ENCODE measurements at regions of chr6 and their contacts with region 1.

Region 1: DNA sequence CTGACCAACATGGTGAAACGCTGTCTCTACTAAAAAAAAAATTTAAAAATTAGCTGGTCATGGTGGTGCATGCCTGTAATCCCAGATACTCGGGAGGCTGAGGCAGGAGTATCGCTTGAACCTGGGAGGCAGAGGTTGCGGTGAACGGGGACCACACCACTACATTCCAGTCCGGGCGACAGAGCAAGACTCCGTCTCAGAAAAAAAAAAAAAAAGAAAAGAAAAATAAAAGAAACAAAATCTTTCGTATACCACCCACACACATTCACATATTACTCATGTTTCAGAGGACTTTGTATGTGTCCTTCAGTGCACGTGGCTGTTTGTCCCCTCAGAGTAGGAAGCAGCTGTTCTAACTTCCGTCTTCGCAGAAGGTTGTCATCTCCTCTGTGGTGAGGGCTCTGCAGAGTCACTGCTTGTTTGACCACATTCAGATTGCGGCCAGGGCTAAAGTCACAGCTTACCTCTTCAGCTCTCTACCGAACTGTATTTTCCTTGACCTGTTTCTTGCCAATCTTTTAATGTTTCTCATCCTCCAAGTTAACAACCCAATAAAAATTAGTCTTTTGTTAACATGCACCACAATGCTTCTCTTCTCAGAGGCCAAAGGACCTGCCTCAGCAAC is 36.6 kb upstream of the HIVEP1 start:
- DNase-seq: peak; percentile 50 to 54
- ATAC-seq: peak; percentile 91 to 96 (median 94)
- H3K4me3 ChIP-seq: no peak overlapping the region
- H3K4me3 Mint-ChIP-seq: peak overlapping the region; percentile 48
- H3K27ac ChIP-seq: peak overlapping the region; percentile 24
- H3K27ac Mint-ChIP-seq: peak overlapping the region; percentile 75 to 83
- H3K4me1 ChIP-seq: peaks cover 19% of the 10 kb centered on the region
- H3K4me1 Mint-ChIP-seq: peaks cover 40 to 47% of the 10 kb centered on the region in 2 donors
- H3K27me3 ChIP-seq: no peaks in the 10 kb centered on the region
- H3K27me3 Mint-ChIP-seq: peaks cover 0 to 3% of the 10 kb centered on the region in 2 donors
- CTCF ChIP-seq: no peak

Region 2: DNA sequence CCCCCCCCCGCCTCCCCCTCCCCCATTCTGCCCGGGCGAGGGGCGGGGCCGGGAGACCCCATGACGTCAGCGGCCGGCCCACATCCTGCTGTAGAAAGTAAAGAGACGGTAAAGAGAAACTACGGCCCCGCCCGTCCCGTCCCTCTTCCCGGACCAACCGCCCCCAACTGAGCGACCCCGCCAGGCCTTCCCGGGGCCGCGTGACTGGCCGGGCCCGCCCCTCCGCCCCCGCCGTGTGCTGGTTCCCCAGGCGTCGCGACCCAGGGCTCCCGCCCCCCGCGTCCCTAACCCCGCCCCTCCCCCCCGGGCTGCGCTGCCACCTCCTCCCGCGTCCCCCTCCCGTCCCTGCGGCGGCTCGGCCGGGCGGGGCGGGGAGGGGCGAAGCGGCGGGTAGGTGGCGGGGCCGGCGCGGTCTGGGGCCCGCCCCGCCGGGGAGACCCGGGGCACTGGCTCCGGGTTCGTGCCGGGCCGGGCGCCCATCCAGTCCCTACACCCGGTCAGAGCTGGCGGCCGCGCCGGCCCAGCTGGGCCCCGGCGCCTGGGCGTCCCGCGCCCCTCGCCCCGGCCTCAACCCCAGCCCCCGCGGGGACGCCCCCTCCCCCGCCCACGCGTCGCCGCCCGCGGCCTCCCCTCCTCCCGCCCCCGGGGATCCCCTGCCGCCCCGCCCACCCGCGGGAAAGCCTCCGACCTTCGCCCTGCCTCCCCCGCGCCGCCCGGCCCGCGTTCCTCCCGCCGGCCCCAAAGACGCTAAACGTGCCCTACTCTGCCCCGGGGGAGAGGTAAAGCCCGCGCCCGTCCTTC is 36.0 kb after region 1 on chr6:
- intact Hi-C with region 1: loop called (anchors 1 kb)
- DNase-seq: peak; percentile 94 to 98
- ATAC-seq: peak; percentile 68 to 90 (median 77)
- H3K4me3 ChIP-seq: peak overlapping the region; percentile 71
- H3K4me3 Mint-ChIP-seq: peak overlapping the region; percentile 96
- H3K27ac ChIP-seq: peak overlapping the region; percentile 95
- H3K27ac Mint-ChIP-seq: peak overlapping the region; percentile 98 to 99
- H3K4me1 ChIP-seq: peaks cover 21% of the 10 kb centered on the region
- H3K4me1 Mint-ChIP-seq: peaks cover 48 to 49% of the 10 kb centered on the region in 2 donors
- H3K27me3 ChIP-seq: no peaks in the 10 kb centered on the region
- H3K27me3 Mint-ChIP-seq: peaks cover 0 to 4% of the 10 kb centered on the region in 2 donors
- CTCF ChIP-seq: no peak

Region 3: GRCh38 chr6:12222405-12223366 is 247.2 kb after region 1 on chr6:
- intact Hi-C with region 1: no loop called
- DNase-seq: no peak
- ATAC-seq: no peak
- H3K4me3 ChIP-seq: no peak overlapping the region
- H3K4me3 Mint-ChIP-seq: no peak overlapping the region
- H3K27ac ChIP-seq: no peak overlapping the region
- H3K27ac Mint-ChIP-seq: no peak overlapping the region
- H3K4me1 ChIP-seq: no peaks in the 10 kb centered on the region
- H3K4me1 Mint-ChIP-seq: no peaks in the 10 kb centered on the region
- H3K27me3 ChIP-seq: no peaks in the 10 kb centered on the region
- H3K27me3 Mint-ChIP-seq: peaks cover 0 to 3% of the 10 kb centered on the region in 2 donors
- CTCF ChIP-seq: no peak

Measured in natural killer cell (primary cell).